ENCODE measurements at regions of chr2 and their contacts with region 1.

Region 1: DNA sequence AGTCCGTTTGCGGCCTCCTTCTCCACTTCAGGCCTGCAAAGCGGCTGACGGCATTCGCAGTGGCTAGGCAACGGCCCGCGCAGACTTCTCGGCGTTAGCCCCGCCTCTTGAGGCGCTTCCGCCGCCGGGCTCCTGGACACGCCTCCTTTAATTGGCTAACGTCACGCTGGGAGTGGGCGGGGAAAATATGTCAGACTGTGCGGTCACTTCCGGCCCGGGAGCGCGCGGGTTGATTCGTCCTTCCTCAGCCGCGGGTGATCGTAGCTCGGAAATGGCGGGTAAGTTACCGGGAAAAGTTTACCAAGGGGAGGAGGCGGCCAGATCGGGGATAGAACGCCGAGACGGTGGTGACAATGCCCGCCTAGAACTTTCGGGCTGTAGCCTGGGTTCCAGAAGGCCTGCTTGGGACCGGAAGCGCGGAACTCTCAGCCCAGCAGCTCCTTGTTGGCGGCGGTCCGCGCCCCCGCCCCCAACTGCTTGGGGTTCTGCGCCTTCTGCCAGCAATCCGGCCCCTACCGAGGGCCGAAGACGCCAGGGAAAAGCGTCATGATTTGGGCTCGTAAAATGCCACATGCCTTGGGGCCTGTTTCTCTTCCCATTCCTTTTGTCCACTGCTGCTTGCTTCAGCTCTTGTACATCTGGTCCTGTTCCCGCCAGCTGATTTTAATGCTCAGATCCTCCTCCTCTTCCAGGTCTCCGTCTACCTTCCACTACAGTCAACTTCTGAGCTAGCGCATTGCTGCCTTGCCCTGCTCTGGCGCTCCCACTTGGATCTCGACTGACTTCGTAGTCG is at the start of gene HAT1:
- DNase-seq: peak; percentile 99
- H3K4me3 ChIP-seq: peak within 1 kb of the TSS; percentile 80 to 93 (median 86)
- H3K27ac ChIP-seq: peak within 1 kb of the TSS; percentile 95 to 98 (median 98)
- H3K4me1 ChIP-seq: peaks cover 0 to 28% (median 22%) of the 10 kb centered on the region in 4 donors
- H3K27me3 ChIP-seq: no peaks in the 10 kb centered on the region
- CTCF ChIP-seq: no peak
- EP300 ChIP-seq: peak in 3 of 4 donors; percentile 0 to 44 (median 33)
- POLR2A ChIP-seq: peak; percentile 36 to 47
- total RNA-seq, gene HAT1: 25.5 to 41.0 (median 34.5) TPM

Region 2: GRCh38 chr2:171985076-171985475 is 62.6 kb after region 1 on chr2:
- intact Hi-C with region 1: no loop called
- DNase-seq: no peak
- H3K4me3 ChIP-seq: no peak overlapping the region
- H3K27ac ChIP-seq: no peak overlapping the region
- H3K4me1 ChIP-seq: no peaks in the 10 kb centered on the region
- H3K27me3 ChIP-seq: no peaks in the 10 kb centered on the region
- CTCF ChIP-seq: no peak
- EP300 ChIP-seq: no peak
- POLR2A ChIP-seq: no peak

Region 3: DNA sequence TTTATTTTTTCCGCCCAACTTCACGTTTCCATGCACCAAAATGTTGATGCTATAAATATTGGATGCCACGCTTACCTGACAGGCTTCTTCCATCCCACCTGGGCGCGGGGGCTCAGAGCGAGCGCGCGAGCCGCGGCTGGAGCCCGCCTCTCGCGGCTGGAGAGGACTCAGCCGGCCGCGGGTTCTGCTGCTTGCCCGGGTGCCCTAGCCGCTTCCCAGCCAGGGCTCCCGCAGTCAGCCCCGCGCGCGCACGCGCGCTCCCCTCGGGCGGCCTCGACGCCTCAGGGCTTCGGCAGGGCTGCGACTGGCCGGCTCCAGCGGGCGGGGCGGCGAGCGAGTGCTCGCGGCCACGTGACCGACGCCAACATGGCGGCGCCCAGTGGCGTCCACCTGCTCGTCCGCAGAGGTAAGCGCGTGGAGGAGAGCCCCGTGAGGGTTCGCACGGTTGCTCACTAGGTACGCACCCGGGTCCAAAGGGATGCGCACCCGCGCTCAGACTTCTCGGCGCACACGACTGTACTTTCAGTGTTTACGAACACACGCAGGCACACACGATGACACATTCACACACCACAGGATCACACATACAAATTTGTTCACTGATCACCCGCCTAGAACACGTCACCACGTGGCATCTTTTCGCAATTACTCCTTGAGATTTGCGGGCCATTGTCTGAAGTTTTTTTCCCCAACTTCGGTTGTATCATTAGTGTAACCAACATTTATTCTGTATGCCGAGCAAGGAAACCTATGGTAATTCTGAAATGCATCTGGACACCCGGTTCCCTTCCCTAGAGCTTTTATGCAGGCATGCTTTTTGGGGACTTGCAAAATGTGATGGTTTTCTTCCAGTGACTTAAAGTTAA is 77.4 kb after region 1 on chr2 and contains the start of gene METAP1D:
- intact Hi-C with region 1: loop called (anchors 2 kb)
- DNase-seq: peak; percentile 93
- H3K4me3 ChIP-seq: peak within 1 kb of the TSS; percentile 57 to 76 (median 62)
- H3K27ac ChIP-seq: peak within 1 kb of the TSS; percentile 47 to 65 (median 56)
- H3K4me1 ChIP-seq: peaks cover 0 to 13% (median 10%) of the 10 kb centered on the region in 4 donors
- H3K27me3 ChIP-seq: no peaks in the 10 kb centered on the region
- CTCF ChIP-seq: no peak
- EP300 ChIP-seq: no peak
- POLR2A ChIP-seq: no peak
- total RNA-seq, gene METAP1D: 7.8 to 14.4 (median 10.2) TPM

Region 4: GRCh38 chr2:172095146-172095904 is 172.9 kb after region 1 on chr2:
- intact Hi-C with region 1: loop called (anchors 5 kb)
- DNase-seq: peak; percentile 77
- H3K4me3 ChIP-seq: peak overlapping the region; percentile 13 to 42 (median 36)
- H3K27ac ChIP-seq: peak overlapping the region in 3 of 4 donors; percentile 17 to 50 (median 40)
- H3K4me1 ChIP-seq: peaks cover 0 to 70% (median 58%) of the 10 kb centered on the region in 4 donors
- H3K27me3 ChIP-seq: peaks cover 95 to 100% (median 99%) of the 10 kb centered on the region in 3 donors
- CTCF ChIP-seq: no peak
- EP300 ChIP-seq: no peak
- POLR2A ChIP-seq: no peak

Measured in sigmoid colon (tissue), 7 donors.